Pancreas (tissue), 10 donors: ENCODE measurements at regions of chr4 and their contacts with region 1.

Region 1: GRCh38 chr4:112751447-112751846 is 114.5 kb downstream of the LARP7 start:
- DNase-seq: no peak
- ATAC-seq: no peak
- H3K4me3 ChIP-seq: no peak overlapping the region
- H3K27ac ChIP-seq: no peak overlapping the region
- H3K4me1 ChIP-seq: no peaks in the 10 kb centered on the region
- H3K27me3 ChIP-seq: no peaks in the 10 kb centered on the region
- CTCF ChIP-seq: no peak

Region 2: GRCh38 chr4:112616984-112617383 is 134.5 kb before region 1 on chr4:
- intact Hi-C with region 1: no loop called
- DNase-seq: no peak
- ATAC-seq: no peak
- H3K4me3 ChIP-seq: no peak overlapping the region
- H3K27ac ChIP-seq: no peak overlapping the region
- H3K4me1 ChIP-seq: no peaks in the 10 kb centered on the region
- H3K27me3 ChIP-seq: no peaks in the 10 kb centered on the region
- CTCF ChIP-seq: no peak

Region 3: DNA sequence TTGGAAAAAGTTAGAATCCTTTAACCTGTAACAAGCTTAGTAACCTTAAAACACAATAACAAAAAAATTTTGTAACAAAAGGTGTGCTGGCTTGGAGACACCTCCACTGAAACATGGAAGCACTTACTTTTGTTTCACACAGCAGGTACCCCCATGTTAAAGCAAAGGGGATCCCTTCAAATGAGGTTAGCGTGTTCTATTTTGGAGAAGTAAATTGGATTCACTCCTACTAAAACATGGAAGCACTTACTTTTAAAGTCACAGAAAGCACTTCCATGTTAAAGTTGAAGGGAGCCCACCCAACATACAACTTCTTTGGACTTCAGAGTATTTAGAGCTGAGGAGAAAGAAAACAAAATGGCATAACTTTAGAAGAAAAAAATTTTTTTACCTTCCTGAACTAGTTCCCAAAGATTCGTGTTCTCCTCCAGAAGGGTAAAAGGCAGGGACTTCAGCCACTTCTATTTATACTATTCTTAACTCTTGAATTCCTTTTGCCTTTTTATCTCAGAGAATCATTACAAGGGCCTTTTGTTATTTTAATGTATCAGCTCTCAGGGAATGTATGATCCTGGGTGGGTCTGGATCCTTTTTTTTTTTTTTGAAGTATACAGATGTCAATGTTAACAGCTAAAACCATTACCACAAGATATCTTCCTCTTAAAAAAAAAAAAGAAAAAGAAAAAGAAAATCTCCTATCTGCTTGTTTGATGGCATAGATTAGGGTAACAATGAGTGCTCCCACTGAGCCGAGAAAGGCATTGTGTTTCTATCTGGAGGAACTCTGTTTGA is 103.0 kb before region 1 on chr4:
- intact Hi-C with region 1: loop called in 1 of 3 experiments (anchors 10 kb)
- DNase-seq: no peak
- ATAC-seq: no peak
- H3K4me3 ChIP-seq: no peak overlapping the region
- H3K27ac ChIP-seq: no peak overlapping the region
- H3K4me1 ChIP-seq: no peaks in the 10 kb centered on the region
- H3K27me3 ChIP-seq: no peaks in the 10 kb centered on the region
- CTCF ChIP-seq: no peak

Region 4: GRCh38 chr4:113243312-113243711 is 491.9 kb after region 1 on chr4:
- intact Hi-C with region 1: no loop called
- DNase-seq: no peak
- ATAC-seq: no peak
- H3K4me3 ChIP-seq: no peak overlapping the region
- H3K27ac ChIP-seq: no peak overlapping the region
- H3K4me1 ChIP-seq: no peaks in the 10 kb centered on the region
- H3K27me3 ChIP-seq: no peaks in the 10 kb centered on the region
- CTCF ChIP-seq: no peak